Breast epithelium (tissue), 4 donors: ENCODE measurements at regions of chr15 and their contacts with region 1.

Region 1: GRCh38 chr15:46556559-46557379 is 921.9 kb downstream of the SQOR start:
- DNase-seq: no peak
- H3K4me3 ChIP-seq: no peak overlapping the region
- H3K27ac ChIP-seq: no peak overlapping the region
- H3K4me1 ChIP-seq: no peaks in the 10 kb centered on the region
- H3K27me3 ChIP-seq: no peaks in the 10 kb centered on the region
- CTCF ChIP-seq: no peak
- POLR2A ChIP-seq: no peak

Region 2: DNA sequence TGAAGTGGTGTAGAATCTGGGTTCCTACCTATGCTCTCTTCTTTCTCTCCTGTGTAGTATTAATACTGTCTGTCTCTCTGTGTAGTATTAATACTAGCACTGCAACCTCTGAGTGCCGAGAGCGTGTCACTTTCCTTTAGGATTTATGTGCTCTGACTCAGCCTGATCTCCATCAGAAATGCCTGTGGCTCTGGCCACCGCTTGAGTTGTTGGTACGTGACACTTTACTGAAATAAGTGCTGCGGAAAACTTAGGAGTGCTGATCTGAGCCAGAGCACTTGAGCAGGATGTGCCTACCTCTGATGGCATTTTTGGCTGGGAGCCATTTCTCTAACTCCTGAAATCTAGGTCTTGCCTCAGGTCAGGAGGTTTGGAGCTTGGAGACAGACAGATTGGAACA is 114.6 kb before region 1 on chr15:
- intact Hi-C with region 1: no loop called
- DNase-seq: no peak
- H3K4me3 ChIP-seq: no peak overlapping the region
- H3K27ac ChIP-seq: no peak overlapping the region
- H3K4me1 ChIP-seq: no peaks in the 10 kb centered on the region
- H3K27me3 ChIP-seq: no peaks in the 10 kb centered on the region
- CTCF ChIP-seq: no peak
- POLR2A ChIP-seq: no peak

Region 3: GRCh38 chr15:46543626-46544025 is 13.1 kb before region 1 on chr15:
- intact Hi-C with region 1: no loop called
- DNase-seq: no peak
- H3K4me3 ChIP-seq: no peak overlapping the region
- H3K27ac ChIP-seq: no peak overlapping the region
- H3K4me1 ChIP-seq: no peaks in the 10 kb centered on the region
- H3K27me3 ChIP-seq: no peaks in the 10 kb centered on the region
- CTCF ChIP-seq: no peak
- POLR2A ChIP-seq: no peak

Region 4: GRCh38 chr15:46671336-46671735 is 114.6 kb after region 1 on chr15:
- intact Hi-C with region 1: no loop called
- DNase-seq: no peak
- H3K4me3 ChIP-seq: no peak overlapping the region
- H3K27ac ChIP-seq: no peak overlapping the region
- H3K4me1 ChIP-seq: no peaks in the 10 kb centered on the region
- H3K27me3 ChIP-seq: no peaks in the 10 kb centered on the region
- CTCF ChIP-seq: no peak
- POLR2A ChIP-seq: no peak

Region 5: GRCh38 chr15:47742334-47742733 is 1185.6 kb after region 1 on chr15:
- intact Hi-C with region 1: loop called (anchors 5 kb)
- DNase-seq: no peak
- H3K4me3 ChIP-seq: no peak overlapping the region
- H3K27ac ChIP-seq: no peak overlapping the region
- H3K4me1 ChIP-seq: no peaks in the 10 kb centered on the region
- H3K27me3 ChIP-seq: no peaks in the 10 kb centered on the region
- CTCF ChIP-seq: no peak
- POLR2A ChIP-seq: no peak